Esophagus muscularis mucosa (tissue), 4 donors: ENCODE measurements at regions of chr7 and their contacts with region 1.

Region 1: GRCh38 chr7:22082886-22083703 is 137.4 kb upstream of the CDCA7L start:
- DNase-seq: peak; percentile 97
- H3K4me3 ChIP-seq: peak overlapping the region; percentile 65 to 84 (median 71)
- H3K27ac ChIP-seq: peak overlapping the region; percentile 84 to 90 (median 88)
- H3K4me1 ChIP-seq: peaks cover 8 to 16% (median 14%) of the 10 kb centered on the region in 4 donors
- H3K27me3 ChIP-seq: no peaks in the 10 kb centered on the region
- CTCF ChIP-seq: peak in 2 of 3 experiments; percentile 94 to 97
- EP300 ChIP-seq: no peak
- POLR2A ChIP-seq: no peak

Region 2: GRCh38 chr7:21429786-21430574 is 653.1 kb before region 1 on chr7:
- intact Hi-C with region 1: loop called (anchors 10 kb)
- DNase-seq: no peak
- H3K4me3 ChIP-seq: no peak overlapping the region
- H3K27ac ChIP-seq: peak overlapping the region in 3 of 4 donors; percentile 99 to 100 (median 99)
- H3K4me1 ChIP-seq: peaks cover 44 to 57% (median 54%) of the 10 kb centered on the region in 4 donors
- H3K27me3 ChIP-seq: no peaks in the 10 kb centered on the region
- CTCF ChIP-seq: no peak
- EP300 ChIP-seq: no peak
- POLR2A ChIP-seq: no peak

Region 3: GRCh38 chr7:22008087-22008486 is 75.0 kb before region 1 on chr7:
- intact Hi-C with region 1: loop called (anchors 5 kb)
- DNase-seq: peak; percentile 82
- H3K4me3 ChIP-seq: no peak overlapping the region
- H3K27ac ChIP-seq: no peak overlapping the region
- H3K4me1 ChIP-seq: peaks cover 0 to 19% (median 5%) of the 10 kb centered on the region in 4 donors
- H3K27me3 ChIP-seq: no peaks in the 10 kb centered on the region
- CTCF ChIP-seq: no peak
- EP300 ChIP-seq: no peak
- POLR2A ChIP-seq: no peak